SK-N-SH (cell line): ENCODE measurements at regions of chr5 and their contacts with region 1.

Region 1: GRCh38 chr5:180784497-180785097 is 18.0 kb downstream of the MGAT1 start:
- DNase-seq: peak; percentile 75
- H3K4me3 ChIP-seq: no peak overlapping the region
- H3K27ac ChIP-seq: peak overlapping the region in 1 of 2 experiments; percentile 84; a peak in 2 of 4 replicates
- H3K4me1 ChIP-seq: peaks cover 2 to 14% of the 10 kb centered on the region in 2 experiments; a peak in 3 of 4 replicates
- H3K27me3 ChIP-seq: no peaks in the 10 kb centered on the region
- CTCF ChIP-seq: peak; percentile 85
- EP300 ChIP-seq: no peak
- RAD21 ChIP-seq: peak; percentile 87

Region 2: DNA sequence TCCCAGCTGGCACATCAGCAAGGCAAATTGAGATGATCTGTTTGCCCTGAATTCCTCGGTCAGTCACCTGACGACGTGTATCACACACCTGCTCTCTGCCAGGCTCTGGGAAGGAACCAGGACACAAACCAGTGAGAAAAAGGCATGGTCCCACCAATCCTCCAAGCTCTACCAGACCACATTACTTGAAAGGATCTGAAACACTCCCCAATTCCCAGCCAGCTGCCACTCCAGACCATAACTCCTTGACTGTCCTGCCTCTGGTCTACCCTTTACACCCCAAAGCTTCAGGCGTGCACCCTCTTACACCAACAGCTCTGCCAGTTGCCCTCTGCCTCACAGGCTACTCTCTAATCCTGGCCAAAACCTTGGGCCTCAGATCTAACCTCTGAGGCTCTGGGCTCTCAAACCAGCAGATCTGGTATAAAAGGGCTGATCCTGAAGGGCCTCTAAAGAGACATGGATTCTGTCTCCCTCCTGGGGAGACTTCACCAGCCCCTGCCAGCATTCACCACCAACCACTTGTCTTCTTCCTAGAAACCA is 11.2 kb after region 1 on chr5:
- CTCF ChIA-PET with region 1: interaction called, 39 read pairs
- POLR2A ChIA-PET with region 1: no interaction called
- DNase-seq: no peak
- H3K4me3 ChIP-seq: no peak overlapping the region
- H3K27ac ChIP-seq: no peak overlapping the region
- H3K4me1 ChIP-seq: peaks cover 11 to 21% of the 10 kb centered on the region in 2 experiments; a peak in 2 of 4 replicates
- H3K27me3 ChIP-seq: no peaks in the 10 kb centered on the region
- CTCF ChIP-seq: no peak
- EP300 ChIP-seq: no peak
- RAD21 ChIP-seq: no peak

Region 3: GRCh38 chr5:180802325-180803180 is 18.0 kb after region 1 on chr5 and contains the start of gene MGAT1:
- CTCF ChIA-PET with region 1: interaction called, 39 read pairs
- POLR2A ChIA-PET with region 1: no interaction called
- DNase-seq: peak; percentile 98
- H3K4me3 ChIP-seq: peak within 1 kb of the TSS; percentile 83 to 94
- H3K27ac ChIP-seq: peak within 1 kb of the TSS; percentile 81 to 85
- H3K4me1 ChIP-seq: peaks cover 31 to 43% of the 10 kb centered on the region in 2 experiments; a peak in 3 of 4 replicates
- H3K27me3 ChIP-seq: no peaks in the 10 kb centered on the region
- CTCF ChIP-seq: no peak
- EP300 ChIP-seq: no peak
- RAD21 ChIP-seq: no peak
- polyA plus RNA-seq, gene MGAT1: 47.3 and 55.8 TPM in 2 replicates

Region 4: DNA sequence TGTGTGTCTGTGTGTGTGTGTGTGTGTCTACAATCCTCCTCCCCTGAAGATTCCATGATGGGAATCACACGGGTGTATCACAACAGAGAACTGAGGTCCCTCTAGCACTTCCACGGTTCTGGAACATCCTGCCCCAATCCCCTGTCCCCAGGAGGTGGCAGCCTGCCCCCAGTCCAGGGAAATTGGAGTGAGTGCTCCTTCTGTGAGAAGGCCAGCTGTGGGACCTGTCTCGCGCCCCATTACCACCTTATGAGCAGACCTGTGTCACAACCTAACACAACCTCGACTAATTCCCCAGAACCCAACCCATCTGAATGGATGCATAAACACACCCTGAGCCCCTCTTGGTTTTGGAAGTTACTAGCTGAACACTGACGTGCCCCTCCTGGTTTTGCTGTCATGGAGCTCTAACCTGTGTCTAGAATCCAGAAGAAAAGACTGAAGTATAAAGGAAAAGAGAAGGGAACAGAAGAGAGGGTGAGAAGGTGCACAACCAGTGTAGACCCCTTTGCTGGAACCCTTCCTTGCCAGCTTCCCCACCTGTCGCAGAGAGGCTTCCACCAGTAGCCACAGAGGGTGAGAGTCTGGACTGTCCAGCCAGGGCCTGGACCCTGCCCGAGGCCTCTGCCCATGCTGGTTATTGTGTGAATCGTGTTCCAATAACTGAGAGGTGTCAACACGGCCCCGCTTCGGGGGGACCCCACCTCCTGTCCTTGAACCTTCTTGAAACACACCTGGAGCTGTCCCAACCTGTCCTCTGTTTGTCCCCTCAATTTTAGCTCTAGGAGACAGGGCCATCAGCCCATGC is 258.9 kb after region 1 on chr5:
- CTCF ChIA-PET with region 1: no interaction called
- POLR2A ChIA-PET with region 1: no interaction called
- DNase-seq: no peak
- H3K4me3 ChIP-seq: no peak overlapping the region
- H3K27ac ChIP-seq: no peak overlapping the region
- H3K4me1 ChIP-seq: no peaks in the 10 kb centered on the region
- H3K27me3 ChIP-seq: peaks cover 60% of the 10 kb centered on the region
- CTCF ChIP-seq: no peak
- EP300 ChIP-seq: no peak
- RAD21 ChIP-seq: no peak